Activated naive CD4-positive, alpha-beta T cell treated with anti-CD3 and anti-CD28 coated beads for 36 hours (primary cell): ENCODE measurements at regions of chr7 and their contacts with region 1.

Region 1: GRCh38 chr7:37833107-37833817 is 15.1 kb upstream of the NME8 start:
- DNase-seq: peak; percentile 57
- H3K4me3 Mint-ChIP-seq: peak overlapping the region; percentile 73
- H3K27ac Mint-ChIP-seq: no peak overlapping the region
- H3K4me1 Mint-ChIP-seq: peaks cover 5% of the 10 kb centered on the region
- H3K27me3 Mint-ChIP-seq: peaks cover 4% of the 10 kb centered on the region

Region 2: GRCh38 chr7:36473454-36474282 is 1359.6 kb before region 1 on chr7:
- CTCF ChIA-PET with region 1: no interaction called
- intact Hi-C with region 1: loop called (anchors 2 kb)
- DNase-seq: peak; percentile 70
- H3K4me3 Mint-ChIP-seq: no peak overlapping the region
- H3K27ac Mint-ChIP-seq: no peak overlapping the region
- H3K4me1 Mint-ChIP-seq: peaks cover 8% of the 10 kb centered on the region
- H3K27me3 Mint-ChIP-seq: no peaks in the 10 kb centered on the region

Region 3: DNA sequence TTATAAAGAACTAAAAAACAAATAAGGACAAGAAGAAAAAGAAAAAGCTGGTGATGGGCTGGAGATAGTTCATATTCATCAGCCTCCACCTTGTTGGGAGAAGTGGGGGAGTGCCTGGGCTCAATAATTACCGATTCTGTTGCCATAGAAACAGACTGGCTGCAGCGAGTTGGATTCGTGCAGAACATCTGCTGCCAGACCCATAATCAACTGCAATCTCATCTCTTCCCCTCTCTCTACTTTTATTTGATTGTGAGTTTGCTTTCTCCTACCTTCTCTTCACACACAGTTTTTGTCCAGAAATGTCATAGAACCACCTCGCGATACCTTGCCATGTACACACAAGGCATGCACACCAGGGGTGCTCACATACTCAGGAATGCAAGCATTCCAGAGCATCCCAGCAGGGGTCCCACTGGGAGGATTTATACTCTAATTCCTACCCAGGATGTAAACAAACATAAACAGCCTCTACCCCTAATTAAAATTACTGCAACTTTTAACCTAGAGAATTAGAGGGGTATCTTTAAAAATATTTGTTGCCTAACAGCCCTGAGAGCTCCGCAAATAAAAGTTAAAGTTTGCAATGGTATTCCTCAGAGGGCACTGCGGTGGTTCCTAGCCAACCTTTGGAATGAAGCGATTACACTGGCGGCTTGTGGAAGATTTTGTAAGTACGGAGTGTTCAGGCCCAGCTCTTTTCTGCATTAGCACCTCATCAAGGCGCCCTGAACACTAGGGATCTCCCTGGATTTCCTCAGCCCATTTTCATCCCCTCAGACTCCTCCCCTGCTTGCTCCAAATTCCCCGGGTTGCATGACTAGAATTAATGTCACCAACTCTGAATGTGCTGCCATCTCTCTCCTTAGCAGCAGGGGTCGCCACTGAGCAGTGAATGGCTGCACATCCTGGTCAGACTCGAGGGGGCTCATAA is 846.6 kb before region 1 on chr7:
- CTCF ChIA-PET with region 1: no interaction called
- intact Hi-C with region 1: loop called (anchors 5 kb)
- DNase-seq: peak; percentile 80
- H3K4me3 Mint-ChIP-seq: no peak overlapping the region
- H3K27ac Mint-ChIP-seq: no peak overlapping the region
- H3K4me1 Mint-ChIP-seq: peaks cover 27% of the 10 kb centered on the region
- H3K27me3 Mint-ChIP-seq: no peaks in the 10 kb centered on the region

Region 4: DNA sequence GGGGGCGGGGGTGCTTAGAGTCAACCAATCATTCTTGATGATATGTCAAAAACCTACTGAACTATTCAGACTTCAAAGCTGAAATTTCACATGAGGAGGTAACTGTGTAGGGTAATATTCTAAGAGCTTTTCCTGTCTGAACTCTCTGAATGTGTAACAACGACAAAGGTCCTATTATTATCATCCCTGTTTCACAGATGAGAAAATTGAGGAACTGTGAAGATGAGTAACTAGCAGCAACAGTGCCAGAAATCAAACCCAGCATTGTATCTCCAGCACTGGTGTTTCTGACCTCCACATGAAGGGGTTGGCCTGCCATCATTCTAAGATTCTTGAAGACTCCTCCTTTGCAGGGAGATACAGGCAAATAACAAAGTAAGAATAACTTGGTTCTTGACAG is 814.3 kb before region 1 on chr7:
- CTCF ChIA-PET with region 1: no interaction called
- intact Hi-C with region 1: no loop called
- DNase-seq: no peak
- H3K4me3 Mint-ChIP-seq: no peak overlapping the region
- H3K27ac Mint-ChIP-seq: no peak overlapping the region
- H3K4me1 Mint-ChIP-seq: peaks cover 5% of the 10 kb centered on the region
- H3K27me3 Mint-ChIP-seq: no peaks in the 10 kb centered on the region

Region 5: DNA sequence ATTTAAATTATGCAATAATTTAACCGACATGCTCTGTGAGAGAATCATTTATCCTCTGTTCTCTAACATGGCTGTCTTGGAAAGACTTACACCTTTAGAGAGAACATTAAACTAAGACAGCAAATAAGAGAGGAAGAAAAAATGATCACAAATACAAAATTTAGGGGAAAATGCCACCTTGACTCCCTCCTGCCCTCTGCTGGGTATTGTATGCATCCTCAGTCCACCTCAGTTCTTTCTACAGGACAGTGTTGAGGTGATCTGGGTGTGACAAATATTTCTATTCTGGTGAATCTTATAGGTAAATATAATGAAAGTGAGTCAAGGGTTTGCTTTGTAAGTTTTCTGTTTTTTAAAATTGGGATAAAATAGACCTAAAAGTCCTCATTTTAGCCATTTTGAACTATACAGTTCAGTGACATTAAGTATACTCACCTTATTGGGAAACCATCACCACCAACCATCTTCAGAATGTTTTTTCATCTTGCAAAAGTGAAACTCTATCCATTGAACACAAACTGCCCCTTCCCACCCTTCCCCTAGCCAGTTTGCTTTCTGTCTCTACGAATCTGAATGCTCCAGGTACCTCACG is 323.1 kb before region 1 on chr7:
- CTCF ChIA-PET with region 1: interaction called, 4 read pairs
- intact Hi-C with region 1: loop called (anchors 5 kb)
- DNase-seq: peak; percentile 49
- H3K4me3 Mint-ChIP-seq: no peak overlapping the region
- H3K27ac Mint-ChIP-seq: no peak overlapping the region
- H3K4me1 Mint-ChIP-seq: no peaks in the 10 kb centered on the region
- H3K27me3 Mint-ChIP-seq: peaks cover 7% of the 10 kb centered on the region

Region 6: DNA sequence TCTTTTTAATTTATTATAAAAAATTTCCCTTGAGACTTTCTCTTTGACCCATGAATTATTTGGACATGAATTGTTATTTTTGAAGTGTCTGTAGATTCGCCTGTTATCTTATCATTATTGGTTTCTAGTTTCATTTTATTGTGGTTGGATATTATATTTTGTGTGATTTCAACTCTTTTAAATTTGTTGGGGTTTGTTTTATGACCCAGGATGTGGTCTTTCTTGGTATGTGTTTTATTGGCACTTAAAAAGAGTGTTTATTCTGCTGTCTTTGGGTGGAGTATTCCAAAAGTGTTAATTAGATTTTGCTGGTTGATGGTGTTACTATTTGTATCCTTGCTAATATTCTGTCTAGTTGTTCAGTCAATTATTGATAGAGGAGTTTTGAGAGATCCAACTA is 200.2 kb before region 1 on chr7:
- CTCF ChIA-PET with region 1: no interaction called
- intact Hi-C with region 1: loop called (anchors 5 kb)
- DNase-seq: no peak
- H3K4me3 Mint-ChIP-seq: no peak overlapping the region
- H3K27ac Mint-ChIP-seq: no peak overlapping the region
- H3K4me1 Mint-ChIP-seq: no peaks in the 10 kb centered on the region
- H3K27me3 Mint-ChIP-seq: peaks cover 31% of the 10 kb centered on the region